Right ventricle myocardium inferior (tissue), 1 donor: ENCODE measurements at regions of chr11 and their contacts with region 1.

Region 1: DNA sequence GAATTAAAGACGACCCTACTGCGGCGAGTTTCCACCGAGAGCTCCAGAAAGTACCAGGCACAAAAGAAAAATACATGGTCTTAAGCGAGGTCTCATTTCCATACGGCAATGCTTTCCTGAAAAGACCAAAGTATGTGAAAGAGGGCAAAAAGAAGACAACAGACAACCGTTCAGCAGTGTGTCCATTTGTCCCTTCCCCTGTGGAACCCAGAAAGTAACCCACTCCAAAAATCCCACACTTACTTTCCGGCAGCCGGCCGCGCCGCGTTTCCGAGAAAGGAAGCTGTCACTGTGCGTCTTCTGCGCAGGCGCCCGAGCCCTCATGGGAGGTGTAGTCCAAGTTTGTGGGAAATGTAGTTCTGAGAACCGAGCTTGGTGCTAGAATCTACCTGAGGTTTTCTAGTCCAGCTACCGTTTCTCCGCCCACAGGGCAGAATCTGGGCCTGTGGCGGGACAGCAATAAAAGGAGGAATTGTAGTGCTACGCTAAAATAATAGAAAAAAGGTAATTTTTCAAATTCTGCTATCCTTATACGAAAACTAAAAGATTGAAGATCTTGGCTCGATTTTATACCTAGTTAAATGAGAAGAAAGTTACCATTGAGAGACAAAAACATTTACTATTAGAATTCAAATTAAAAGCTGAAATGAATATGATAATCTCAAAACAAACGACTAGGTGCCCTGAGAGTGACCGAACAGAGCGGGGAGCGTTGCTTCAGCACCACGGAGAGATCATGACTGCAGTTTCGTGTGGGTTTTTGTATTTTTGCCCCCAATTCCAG is at the start of gene PUS3:
- DNase-seq: peak; percentile 96
- ATAC-seq: peak; percentile 95
- total RNA-seq, gene PUS3: 8.1 TPM

Region 2: DNA sequence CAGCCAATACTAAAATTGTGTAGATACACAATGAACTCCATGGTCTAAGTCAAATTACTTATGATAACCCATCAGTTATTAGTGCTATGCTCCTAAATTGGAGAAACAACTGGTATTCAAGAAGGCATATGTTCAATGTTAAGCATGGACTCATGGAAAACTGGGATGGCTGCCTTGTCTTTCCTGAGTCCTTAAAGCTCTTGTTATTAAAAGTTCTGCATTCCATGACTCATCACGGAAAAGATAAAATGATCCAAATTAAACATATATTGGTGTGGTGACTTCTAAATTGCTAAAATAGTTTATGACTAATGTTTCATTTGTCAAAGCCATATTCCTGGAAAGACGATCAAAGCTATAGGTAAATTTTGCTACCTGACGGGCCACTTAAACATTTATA is 343.2 kb before region 1 on chr11:
- intact Hi-C with region 1: no loop called
- DNase-seq: no peak
- ATAC-seq: no peak

Region 3: GRCh38 chr11:125887373-125888324 is 15.5 kb before region 1 on chr11 and contains the start of gene HYLS1:
- intact Hi-C with region 1: loop called (anchors 1 kb)
- DNase-seq: peak; percentile 95
- ATAC-seq: peak; percentile 99
- total RNA-seq, gene HYLS1: 5.0 TPM